CD8-positive, alpha-beta memory T cell (primary cell): ENCODE measurements at regions of chr2 and their contacts with region 1.

Region 1: DNA sequence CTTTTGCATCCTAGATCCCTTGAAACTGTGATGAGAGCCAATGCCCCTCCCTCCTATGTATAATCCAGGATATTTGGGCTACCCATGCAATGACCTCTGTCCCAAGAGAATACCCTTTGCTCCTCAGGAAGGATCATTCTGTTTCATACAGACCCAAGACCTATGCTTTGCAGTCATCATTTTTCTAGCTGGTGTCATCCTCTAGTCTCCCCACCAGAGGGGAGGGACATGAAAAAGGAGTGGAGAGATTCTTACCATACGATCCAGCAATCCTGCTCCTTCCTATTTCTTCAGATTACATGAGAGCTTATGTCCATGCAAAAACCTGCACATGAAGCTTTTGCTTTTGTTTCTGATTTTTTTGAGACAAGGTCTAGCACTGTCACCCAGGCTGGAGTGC is 13.8 kb upstream of the GIGYF2 start:
- DNase-seq: no peak
- H3K4me3 ChIP-seq: no peak overlapping the region
- H3K4me3 Mint-ChIP-seq: no peak overlapping the region
- H3K27ac ChIP-seq: no peak overlapping the region
- H3K27ac Mint-ChIP-seq: no peak overlapping the region
- H3K4me1 ChIP-seq: no peaks in the 10 kb centered on the region
- H3K4me1 Mint-ChIP-seq: no peaks in the 10 kb centered on the region
- H3K27me3 ChIP-seq: no peaks in the 10 kb centered on the region
- H3K27me3 Mint-ChIP-seq: peaks cover 8 to 33% of the 10 kb centered on the region in 2 donors

Region 2: DNA sequence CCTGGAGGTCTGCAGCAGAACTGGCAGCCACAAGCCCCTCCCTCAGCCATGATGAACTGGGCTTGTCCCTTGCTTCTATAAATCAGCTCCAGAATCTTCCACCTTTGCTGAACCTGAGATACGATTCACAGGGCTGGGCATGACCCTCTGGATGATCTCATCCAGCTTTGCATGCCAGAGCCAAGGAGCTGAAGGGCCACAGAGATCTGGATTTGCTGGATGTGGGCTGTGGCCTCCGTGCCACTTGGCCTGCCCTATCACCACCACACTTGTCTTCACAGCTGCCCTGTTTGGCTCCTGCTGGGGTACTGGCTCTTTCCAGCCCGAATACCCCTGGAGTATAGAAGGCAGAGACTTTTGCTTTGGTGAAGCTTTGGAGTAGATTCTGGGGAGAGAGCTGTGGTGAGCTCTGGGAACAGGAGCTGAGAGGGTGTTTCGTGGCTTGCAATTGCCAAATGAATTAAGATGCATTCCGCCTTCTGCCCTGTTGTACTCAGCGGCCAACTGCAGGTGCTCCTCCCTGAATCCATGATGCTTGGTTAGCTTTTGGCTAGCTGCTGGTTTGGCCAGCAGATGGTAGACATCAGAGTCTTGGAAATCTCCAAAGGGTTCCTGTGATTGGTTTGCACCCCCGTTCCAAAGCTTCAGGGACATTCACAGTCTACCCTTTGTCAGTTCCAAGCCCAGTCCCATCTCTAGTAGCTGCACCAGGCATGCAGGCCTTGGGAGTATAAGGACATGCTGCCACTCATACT is 17.1 kb before region 1 on chr2:
- CTCF ChIA-PET with region 1: no interaction called
- POLR2A ChIA-PET with region 1: interaction called, 14 read pairs
- DNase-seq: no peak
- H3K4me3 ChIP-seq: no peak overlapping the region
- H3K4me3 Mint-ChIP-seq: no peak overlapping the region
- H3K27ac ChIP-seq: no peak overlapping the region
- H3K27ac Mint-ChIP-seq: peak overlapping the region in 1 of 8 donors; percentile 47
- H3K4me1 ChIP-seq: no peaks in the 10 kb centered on the region
- H3K4me1 Mint-ChIP-seq: no peaks in the 10 kb centered on the region
- H3K27me3 ChIP-seq: peaks cover 4% of the 10 kb centered on the region
- H3K27me3 Mint-ChIP-seq: peaks cover 12 to 22% of the 10 kb centered on the region in 2 donors

Region 3: GRCh38 chr2:232728785-232729184 is 45.4 kb after region 1 on chr2:
- CTCF ChIA-PET with region 1: no interaction called
- POLR2A ChIA-PET with region 1: no interaction called
- DNase-seq: no peak
- H3K4me3 ChIP-seq: no peak overlapping the region
- H3K4me3 Mint-ChIP-seq: no peak overlapping the region
- H3K27ac ChIP-seq: no peak overlapping the region
- H3K27ac Mint-ChIP-seq: peak overlapping the region in 1 of 8 donors; percentile 32
- H3K4me1 ChIP-seq: no peaks in the 10 kb centered on the region
- H3K4me1 Mint-ChIP-seq: peaks cover 21 to 49% (median 31%) of the 10 kb centered on the region in 3 donors
- H3K27me3 ChIP-seq: no peaks in the 10 kb centered on the region
- H3K27me3 Mint-ChIP-seq: no peaks in the 10 kb centered on the region